Activated naive CD4-positive, alpha-beta T cell treated with anti-CD3 and anti-CD28 coated beads for 36 hours (primary cell): ENCODE measurements at regions of chr1 and their contacts with region 1.

Region 1: DNA sequence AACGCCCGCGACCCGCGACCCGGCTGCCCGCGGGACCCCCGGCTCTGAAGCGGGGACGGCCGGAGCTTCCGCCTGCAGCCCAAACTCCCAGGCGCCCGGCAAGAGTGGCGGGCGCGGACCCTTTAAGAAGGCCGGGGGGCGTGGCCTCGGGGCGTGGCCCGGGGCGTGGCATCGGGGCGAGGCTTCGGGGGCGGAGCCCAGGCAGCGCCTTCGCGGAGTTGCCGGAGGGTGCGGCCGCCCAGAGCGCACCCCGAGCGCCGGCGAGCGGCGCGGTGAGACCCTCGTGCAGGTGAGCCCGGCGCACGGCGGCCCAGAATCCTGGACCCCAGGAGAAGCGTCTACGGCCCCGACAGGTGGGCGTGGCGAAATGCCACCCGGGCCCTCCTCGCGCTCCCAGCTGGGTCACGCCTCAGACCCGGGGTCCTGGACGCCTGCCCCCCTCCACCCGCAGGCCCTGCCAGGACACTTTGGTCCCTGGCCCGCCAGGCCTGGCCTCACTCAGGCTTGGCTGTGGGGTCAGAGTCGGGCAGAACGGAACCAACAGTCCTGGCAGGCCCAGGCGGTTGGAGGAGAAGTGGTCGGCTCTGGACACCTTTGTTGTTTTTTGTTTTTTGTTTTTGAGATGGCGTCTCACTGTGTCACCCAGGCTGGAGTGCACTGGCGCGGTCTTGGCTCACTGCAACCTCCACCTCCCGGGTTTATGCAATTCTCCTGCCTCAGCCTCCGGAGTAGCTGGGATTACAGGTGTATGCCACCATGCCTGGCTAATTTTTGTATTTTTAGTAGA is 14.4 kb downstream of the RNF223 start:
- DNase-seq: peak; percentile 94
- H3K4me3 Mint-ChIP-seq: peak overlapping the region; percentile 71
- H3K27ac Mint-ChIP-seq: no peak overlapping the region
- H3K4me1 Mint-ChIP-seq: peaks cover 37% of the 10 kb centered on the region
- H3K27me3 Mint-ChIP-seq: peaks cover 26% of the 10 kb centered on the region

Region 2: DNA sequence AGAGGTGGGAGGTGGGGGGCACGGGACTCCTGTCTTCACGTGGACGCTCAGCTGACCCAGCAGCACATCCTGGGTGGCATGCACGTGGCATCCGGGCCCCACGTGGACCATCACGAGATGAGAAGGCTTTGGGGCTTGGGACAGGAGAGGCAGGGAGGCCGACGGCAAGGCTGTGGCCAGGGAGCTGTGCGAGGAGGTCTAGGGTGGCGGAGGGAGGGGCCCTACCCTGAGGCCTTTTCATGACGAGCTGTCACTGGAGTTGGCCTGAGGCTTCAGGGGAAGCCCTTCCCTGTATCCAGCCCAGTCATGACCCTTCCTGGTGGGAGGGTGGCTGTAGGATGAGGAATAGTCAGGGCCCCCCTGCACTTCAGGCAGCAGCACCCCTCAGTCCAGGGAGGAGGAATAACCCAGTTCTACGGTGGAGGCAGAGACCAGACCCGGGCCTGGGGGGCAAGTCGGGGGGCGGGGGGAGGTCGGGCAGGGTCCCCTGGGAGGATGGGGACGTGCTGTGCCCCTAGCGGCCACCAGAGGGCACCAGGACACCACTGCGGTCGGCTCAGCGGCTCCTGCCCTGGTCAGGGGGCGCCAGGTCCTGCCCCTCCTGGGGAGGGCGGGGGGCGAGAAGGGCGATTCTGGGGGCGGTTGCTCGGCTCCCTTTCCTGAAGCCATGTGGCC is 75.8 kb before region 1 on chr1:
- CTCF ChIA-PET with region 1: interaction called, 39 read pairs
- intact Hi-C with region 1: loop called (anchors 1 kb)
- DNase-seq: peak; percentile 73
- H3K4me3 Mint-ChIP-seq: no peak overlapping the region
- H3K27ac Mint-ChIP-seq: no peak overlapping the region
- H3K4me1 Mint-ChIP-seq: no peaks in the 10 kb centered on the region
- H3K27me3 Mint-ChIP-seq: peaks cover 17% of the 10 kb centered on the region

Region 3: GRCh38 chr1:1019122-1019999 is 40.3 kb before region 1 on chr1:
- CTCF ChIA-PET with region 1: interaction called, 10 read pairs
- intact Hi-C with region 1: loop called (anchors 1 kb)
- DNase-seq: peak; percentile 77
- H3K4me3 Mint-ChIP-seq: peak overlapping the region; percentile 68
- H3K27ac Mint-ChIP-seq: no peak overlapping the region
- H3K4me1 Mint-ChIP-seq: peaks cover 16% of the 10 kb centered on the region
- H3K27me3 Mint-ChIP-seq: peaks cover 4% of the 10 kb centered on the region

Region 4: GRCh38 chr1:1040004-1040991 is 19.4 kb before region 1 on chr1:
- CTCF ChIA-PET with region 1: interaction called, 12 read pairs
- intact Hi-C with region 1: loop called (anchors 1 kb)
- DNase-seq: peak; percentile 84
- H3K4me3 Mint-ChIP-seq: peak overlapping the region; percentile 57
- H3K27ac Mint-ChIP-seq: no peak overlapping the region
- H3K4me1 Mint-ChIP-seq: peaks cover 19% of the 10 kb centered on the region
- H3K27me3 Mint-ChIP-seq: peaks cover 14% of the 10 kb centered on the region

Region 5: GRCh38 chr1:1208713-1209433 is 149.2 kb after region 1 on chr1:
- CTCF ChIA-PET with region 1: interaction called, 3 read pairs
- intact Hi-C with region 1: loop called (anchors 2 kb)
- DNase-seq: peak; percentile 66
- H3K4me3 Mint-ChIP-seq: peak overlapping the region; percentile 80
- H3K27ac Mint-ChIP-seq: peak overlapping the region; percentile 89
- H3K4me1 Mint-ChIP-seq: peaks cover 34% of the 10 kb centered on the region
- H3K27me3 Mint-ChIP-seq: no peaks in the 10 kb centered on the region